Mucosa of descending colon (tissue), 3 donors: ENCODE measurements at regions of chr21 and their contacts with region 1.

Region 1: DNA sequence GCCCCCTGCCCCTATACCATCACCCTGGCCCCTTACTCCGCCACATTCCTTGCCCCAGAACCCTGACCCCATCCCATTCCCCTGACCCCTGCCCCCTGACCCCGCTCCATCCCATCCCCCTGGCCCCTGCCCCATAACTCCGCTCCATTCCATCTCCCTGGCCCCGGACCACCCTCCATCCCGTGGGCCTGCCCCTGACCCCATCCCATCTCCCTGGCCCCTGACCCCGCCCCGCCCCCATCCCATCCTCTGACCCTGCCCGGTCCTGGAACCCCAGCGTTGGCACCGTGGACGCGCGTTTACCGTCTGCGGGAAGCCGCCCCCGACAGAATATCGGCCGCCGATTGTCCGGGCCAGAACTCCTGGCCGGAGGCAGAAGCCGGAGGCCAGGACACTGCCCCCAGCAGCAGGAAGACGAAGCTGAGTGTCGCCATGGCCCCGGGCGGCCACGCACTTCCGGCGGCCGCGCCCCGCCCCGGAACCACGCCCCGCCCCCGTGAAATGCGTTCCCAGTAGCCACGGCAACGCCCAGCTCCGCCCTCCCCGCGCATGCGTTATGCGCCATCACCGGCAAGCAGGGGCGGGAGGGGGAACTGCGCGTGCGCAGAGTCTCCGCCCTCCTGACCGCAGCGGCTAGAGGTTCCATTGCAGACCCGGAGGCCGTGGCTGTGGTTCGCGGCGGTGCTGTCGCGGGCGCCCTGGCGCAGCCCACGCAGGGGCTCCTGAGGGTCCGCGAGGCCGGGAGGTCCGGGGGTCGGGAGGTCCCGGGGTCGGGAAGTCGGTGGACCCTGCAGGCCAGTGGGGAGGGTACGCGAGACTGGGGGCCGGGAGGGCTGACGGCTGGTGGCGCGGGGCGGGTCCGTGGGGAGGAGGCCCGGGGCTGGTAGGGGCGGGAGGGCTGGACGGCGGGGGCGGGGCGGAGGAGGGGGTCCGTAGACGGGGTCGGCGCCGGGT is at the start of gene POFUT2:
- DNase-seq: peak; percentile 98 to 99 (median 98)
- ATAC-seq: peak; percentile 94
- H3K4me3 ChIP-seq: peak within 1 kb of the TSS; percentile 57
- H3K4me1 ChIP-seq: peaks cover 19% of the 10 kb centered on the region
- CTCF ChIP-seq: no peak
- total RNA-seq, gene POFUT2: 26.4 to 38.0 (median 29.8) TPM

Region 2: GRCh38 chr21:45109831-45110492 is 177.8 kb before region 1 on chr21:
- intact Hi-C with region 1: no loop called
- DNase-seq: peak in 1 of 3 donors; percentile 41
- ATAC-seq: peak; percentile 70
- H3K4me3 ChIP-seq: no peak overlapping the region
- H3K4me1 ChIP-seq: no peaks in the 10 kb centered on the region
- CTCF ChIP-seq: no peak

Region 3: GRCh38 chr21:45140346-45140940 is 147.3 kb before region 1 on chr21:
- intact Hi-C with region 1: loop called in 1 of 2 experiments (anchors 10 kb)
- DNase-seq: peak in 2 of 3 donors; percentile 77 to 81
- ATAC-seq: peak; percentile 83
- H3K4me3 ChIP-seq: no peak overlapping the region
- H3K4me1 ChIP-seq: no peaks in the 10 kb centered on the region
- CTCF ChIP-seq: peak; percentile 55

Region 4: DNA sequence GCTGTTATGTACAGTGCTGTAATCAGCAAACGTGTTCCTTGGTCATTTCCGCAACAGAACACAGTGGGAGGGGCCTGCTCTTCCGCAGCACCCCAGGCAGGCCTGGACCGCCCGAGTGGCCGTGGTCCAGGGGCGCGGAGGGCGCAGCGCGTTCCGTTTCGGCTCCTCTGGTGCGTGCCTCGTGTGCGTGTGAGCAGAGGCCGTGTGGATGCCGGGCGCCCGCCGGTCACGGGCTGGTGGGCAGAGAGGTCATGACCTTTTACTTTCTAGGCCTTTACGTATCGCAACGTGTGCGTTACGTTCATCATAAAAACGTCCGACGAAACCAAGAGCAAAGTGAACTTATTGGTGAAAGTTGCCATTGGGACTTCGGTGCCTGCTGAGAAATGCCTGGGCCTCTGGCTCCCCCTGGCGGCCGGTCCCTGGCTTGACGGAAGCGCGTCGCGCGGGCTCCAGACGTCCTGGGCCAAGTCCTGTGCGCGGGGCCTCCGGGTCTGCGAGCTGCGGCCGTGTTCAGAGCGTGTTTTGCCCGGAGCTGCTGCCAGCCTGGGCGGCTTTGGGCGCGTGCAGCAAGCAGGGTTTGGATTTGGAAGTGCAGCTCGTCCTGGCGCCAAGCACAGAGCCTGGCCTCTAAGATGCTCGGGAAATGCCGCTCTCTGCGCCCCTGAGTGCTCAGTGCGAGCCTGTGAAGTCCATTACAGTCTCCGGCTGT is 151.6 kb after region 1 on chr21:
- intact Hi-C with region 1: loop called (anchors 5 kb)
- DNase-seq: peak; percentile 82 to 92 (median 88)
- ATAC-seq: peak; percentile 93
- H3K4me3 ChIP-seq: no peak overlapping the region
- H3K4me1 ChIP-seq: peaks cover 9% of the 10 kb centered on the region
- CTCF ChIP-seq: peak; percentile 91